Left ventricle myocardium superior (tissue), 1 donor: ENCODE measurements at regions of chr7 and their contacts with region 1.

Region 1: GRCh38 chr7:33757562-33758165 is 147.7 kb upstream of the BMPER start:
- DNase-seq: no peak
- ATAC-seq: no peak

Region 2: DNA sequence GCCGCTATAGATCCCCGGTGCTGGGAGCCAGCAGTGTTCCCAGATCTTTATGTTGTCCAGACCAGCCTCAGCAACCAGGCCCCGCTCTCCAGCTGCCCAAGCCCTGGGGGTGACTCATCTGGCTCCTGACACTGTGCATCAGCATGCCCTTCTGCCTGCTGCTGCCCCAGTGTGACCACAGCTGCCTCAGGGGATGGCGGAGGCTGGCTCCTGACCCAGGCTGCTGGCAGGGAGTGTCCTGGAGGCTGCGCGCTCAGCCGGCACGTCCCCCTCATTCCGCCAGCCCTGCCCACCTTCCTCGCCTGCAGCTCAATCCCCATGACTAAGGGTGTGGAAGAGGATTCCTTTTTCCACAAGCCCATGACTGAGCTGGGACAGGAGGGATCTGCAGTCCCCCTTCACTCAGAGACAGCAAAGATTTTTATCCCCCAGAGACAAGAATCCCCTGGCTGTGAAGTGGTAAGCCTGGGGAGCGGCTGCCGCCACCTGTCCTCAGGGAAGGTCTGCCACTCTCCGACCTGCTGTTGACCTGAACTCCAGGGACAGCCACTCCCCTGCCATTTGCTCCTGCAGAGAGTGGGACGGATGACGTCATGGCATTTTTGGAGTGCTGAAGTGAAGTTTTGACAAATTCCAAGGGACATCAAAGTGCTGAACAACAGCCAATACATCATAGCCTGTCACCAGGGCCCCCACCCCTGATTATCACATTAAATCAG is 35.1 kb before region 1 on chr7:
- intact Hi-C with region 1: no loop called
- DNase-seq: no peak
- ATAC-seq: no peak

Region 3: GRCh38 chr7:33895025-33895804 is 137.6 kb after region 1 on chr7:
- intact Hi-C with region 1: loop called (anchors 2 kb)
- DNase-seq: peak; percentile 91
- ATAC-seq: peak; percentile 98